B cell (primary cell): ENCODE measurements at regions of chr1 and their contacts with region 1.

Region 1: GRCh38 chr1:17207966-17208418 is 3.1 kb downstream of the PADI1 start:
- DNase-seq: peak; percentile 67
- ATAC-seq: peak; percentile 80
- H3K4me3 ChIP-seq: no peak overlapping the region
- H3K4me3 Mint-ChIP-seq: peak overlapping the region; percentile 85
- H3K27ac ChIP-seq: no peak overlapping the region
- H3K27ac Mint-ChIP-seq: peak overlapping the region; percentile 60
- H3K4me1 ChIP-seq: peaks cover 22% of the 10 kb centered on the region in 2 donors
- H3K4me1 Mint-ChIP-seq: peaks cover 32% of the 10 kb centered on the region
- H3K27me3 ChIP-seq: peaks cover 0 to 7% (median 0%) of the 10 kb centered on the region in 4 experiments
- H3K27me3 Mint-ChIP-seq: peaks cover 6% of the 10 kb centered on the region
- CTCF ChIP-seq: no peak

Region 2: GRCh38 chr1:17141441-17142197 is 66.4 kb before region 1 on chr1:
- CTCF ChIA-PET with region 1: interaction called, 3 read pairs
- POLR2A ChIA-PET with region 1: interaction called, 4 read pairs
- intact Hi-C with region 1: loop called (anchors 1 kb)
- DNase-seq: peak; percentile 73
- ATAC-seq: peak; percentile 77
- H3K4me3 ChIP-seq: no peak overlapping the region
- H3K4me3 Mint-ChIP-seq: peak overlapping the region; percentile 60
- H3K27ac ChIP-seq: peak overlapping the region in 1 of 2 donors; percentile 20
- H3K27ac Mint-ChIP-seq: peak overlapping the region; percentile 87
- H3K4me1 ChIP-seq: peaks cover 5 to 18% of the 10 kb centered on the region in 2 donors
- H3K4me1 Mint-ChIP-seq: peaks cover 24% of the 10 kb centered on the region
- H3K27me3 ChIP-seq: peaks cover 0 to 3% (median 0%) of the 10 kb centered on the region in 4 experiments
- H3K27me3 Mint-ChIP-seq: peaks cover 2% of the 10 kb centered on the region
- CTCF ChIP-seq: no peak